Activated T-helper 1 cell treated with anti-CD3 and anti-CD28 coated beads, Interleukin-12 subunit alpha, Interleukin-12 subunit beta, Interleukin-2, Interleukin-4 antibody, amounts not matched to agents 30 ng/mL and 10 ng/mL and 1 ng/mL, durations not matched to agents 14 hours and 24 hours and 36 hours (primary cell): ENCODE measurements at regions of chr2 and their contacts with region 1.

Region 1: GRCh38 chr2:86464652-86465051 is 23.5 kb downstream of the KDM3A start:
- DNase-seq: no peak
- H3K4me3 Mint-ChIP-seq: peak overlapping the region; percentile 58
- H3K27ac Mint-ChIP-seq: peak overlapping the region; percentile 67
- H3K4me1 Mint-ChIP-seq: peaks cover 56% of the 10 kb centered on the region
- H3K27me3 Mint-ChIP-seq: no peaks in the 10 kb centered on the region

Region 2: GRCh38 chr2:86480105-86480504 is 15.5 kb after region 1 on chr2:
- intact Hi-C with region 1: loop called (anchors 2 kb)
- DNase-seq: no peak
- H3K4me3 Mint-ChIP-seq: no peak overlapping the region
- H3K27ac Mint-ChIP-seq: no peak overlapping the region
- H3K4me1 Mint-ChIP-seq: peaks cover 66% of the 10 kb centered on the region
- H3K27me3 Mint-ChIP-seq: no peaks in the 10 kb centered on the region